AG04449 (cell line): ENCODE measurements at regions of chr12 and their contacts with region 1.

Region 1: DNA sequence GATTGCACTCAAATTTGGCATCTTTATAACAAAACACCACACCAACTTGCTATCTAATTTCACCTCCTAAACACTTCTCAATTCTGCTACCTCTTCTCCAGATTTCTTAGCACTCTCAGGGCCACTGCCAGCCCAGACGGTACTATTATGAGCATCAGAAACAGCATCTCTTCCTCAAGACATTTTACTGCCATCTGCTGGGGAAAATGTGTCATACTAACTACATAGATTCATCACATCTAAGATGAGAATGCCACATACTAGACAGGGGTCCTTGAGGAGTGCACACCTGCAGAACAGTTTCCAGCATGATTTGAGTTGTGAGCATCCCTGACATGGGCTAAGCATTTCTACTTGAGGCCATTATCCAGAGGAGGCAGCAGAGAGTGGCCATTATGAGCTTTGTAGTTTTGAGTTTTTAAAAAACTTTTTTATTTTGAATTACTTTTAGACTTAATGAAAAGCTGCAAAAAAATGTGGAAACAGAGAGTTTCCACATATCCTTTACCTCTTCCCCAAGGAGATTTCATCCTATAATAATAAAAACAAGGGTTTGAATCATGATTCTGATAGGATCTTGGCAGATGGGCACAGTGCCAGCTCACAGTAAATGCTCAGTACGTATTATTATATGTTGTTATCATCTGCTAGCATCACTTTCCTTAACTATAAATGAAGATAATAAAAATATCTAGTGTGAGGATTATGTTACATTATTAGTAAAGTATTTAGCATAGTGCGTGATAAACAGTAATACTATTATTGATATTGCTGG is 15.2 kb upstream of the GRIP1 start:
- DNase-seq: peak; percentile 17
- H3K4me3 ChIP-seq: no peak overlapping the region
- CTCF ChIP-seq: peak; percentile 56

Region 2: GRCh38 chr12:66269757-66270383 is 424.2 kb before region 1 on chr12:
- CTCF ChIA-PET with region 1: interaction called, 29 read pairs
- POLR2A ChIA-PET with region 1: no interaction called
- DNase-seq: peak; percentile 12
- H3K4me3 ChIP-seq: no peak overlapping the region
- CTCF ChIP-seq: peak; percentile 48

Region 3: GRCh38 chr12:66352197-66352596 is 341.9 kb before region 1 on chr12:
- CTCF ChIA-PET with region 1: interaction called, 24 read pairs
- POLR2A ChIA-PET with region 1: no interaction called
- DNase-seq: no peak
- H3K4me3 ChIP-seq: no peak overlapping the region
- CTCF ChIP-seq: peak; percentile 53

Region 4: DNA sequence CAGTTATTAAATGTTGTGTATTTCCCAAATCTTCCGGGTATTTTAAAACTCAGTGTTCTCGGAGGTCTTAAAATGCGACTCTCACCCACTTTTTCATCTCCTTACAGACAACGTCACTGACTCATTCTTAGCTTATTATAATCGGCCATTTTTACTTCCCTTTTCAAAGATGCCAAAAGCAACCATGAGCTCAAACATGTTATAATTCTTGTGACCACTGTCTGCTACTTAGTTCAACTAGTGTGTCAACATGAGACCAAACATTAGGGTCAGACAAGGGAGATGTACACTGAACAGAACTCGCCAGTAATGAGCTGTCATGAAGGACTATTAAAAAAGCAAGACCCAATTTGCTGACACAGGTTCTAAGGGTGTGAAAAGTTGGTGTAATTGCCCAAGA is 11.0 kb before region 1 on chr12:
- CTCF ChIA-PET with region 1: interaction called, 10 read pairs
- POLR2A ChIA-PET with region 1: no interaction called
- DNase-seq: no peak
- H3K4me3 ChIP-seq: no peak overlapping the region
- CTCF ChIP-seq: no peak

Region 5: GRCh38 chr12:66708704-66709456 is 14.8 kb after region 1 on chr12:
- CTCF ChIA-PET with region 1: interaction called, 14 read pairs
- POLR2A ChIA-PET with region 1: no interaction called
- DNase-seq: no peak
- H3K4me3 ChIP-seq: no peak overlapping the region
- CTCF ChIP-seq: no peak

Region 6: GRCh38 chr12:66776974-66777373 is 82.9 kb after region 1 on chr12:
- CTCF ChIA-PET with region 1: no interaction called
- POLR2A ChIA-PET with region 1: no interaction called
- DNase-seq: no peak
- H3K4me3 ChIP-seq: no peak overlapping the region
- CTCF ChIP-seq: no peak